Heart left ventricle (tissue), 16 donors: ENCODE measurements at regions of chr20 and their contacts with region 1.

Region 1: DNA sequence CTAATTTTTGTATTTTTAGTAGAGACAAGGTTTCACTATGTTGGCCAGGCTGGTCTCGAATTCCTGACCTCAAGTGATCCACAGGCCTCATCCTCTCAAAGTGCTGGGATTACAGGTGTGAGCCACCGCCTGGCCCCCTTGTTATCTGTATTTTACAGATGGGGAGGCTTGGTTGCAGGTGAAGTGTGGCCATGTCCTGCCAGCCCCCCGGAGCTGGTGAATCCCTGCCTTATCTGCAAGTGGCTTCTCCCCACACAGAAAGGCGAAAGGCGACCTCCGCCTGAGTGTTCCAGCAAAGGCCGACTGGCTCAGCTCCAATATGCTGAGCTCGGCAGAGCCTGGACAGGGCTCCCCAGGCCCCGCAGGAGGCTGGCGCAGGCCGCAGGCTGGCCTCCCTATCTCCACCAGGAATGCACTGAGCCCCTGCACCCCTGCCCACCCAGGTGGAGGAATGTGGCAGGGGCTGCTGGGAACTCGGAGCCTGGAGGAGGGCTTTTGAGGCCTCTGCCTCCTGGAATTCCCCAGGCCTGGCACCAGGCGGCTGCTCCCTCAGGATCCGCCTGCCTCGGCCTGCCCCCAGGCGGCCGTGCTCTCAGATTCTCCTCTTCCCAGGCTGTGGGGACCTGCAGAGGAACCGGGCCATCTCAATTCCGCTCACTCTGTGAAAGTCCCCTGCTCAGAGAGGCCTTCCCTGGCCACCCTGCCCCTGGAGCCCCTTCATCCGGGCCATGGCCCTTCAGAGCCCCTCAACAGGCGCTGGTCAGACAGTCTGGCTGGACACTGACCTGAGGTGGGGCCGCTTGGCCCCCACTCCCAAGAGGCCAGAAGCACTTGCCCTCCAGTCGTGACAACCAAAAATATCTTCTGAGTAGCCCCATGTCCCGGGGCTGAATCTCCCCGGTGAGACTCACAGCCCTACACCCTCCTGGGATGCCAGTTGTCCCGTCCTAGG is 9.3 kb upstream of the LAMA5 start:
- DNase-seq: peak; percentile 61 to 77 (median 68)
- ATAC-seq: peak; percentile 52 to 81 (median 73)
- H3K4me3 ChIP-seq: no peak overlapping the region
- H3K27ac ChIP-seq: peak overlapping the region in 11 of 12 donors; percentile 49 to 97 (median 67)
- H3K4me1 ChIP-seq: peaks cover 0 to 59% (median 36%) of the 10 kb centered on the region in 12 donors
- H3K27me3 ChIP-seq: no peaks in the 10 kb centered on the region
- CTCF ChIP-seq: peak; percentile 16 to 66 (median 51)
- POLR2A ChIP-seq: no peak

Region 2: GRCh38 chr20:62339647-62340070 is 36.7 kb before region 1 on chr20:
- intact Hi-C with region 1: loop called in 1 of 10 experiments (anchors 5 kb)
- DNase-seq: peak in 2 of 5 donors; percentile 7 to 37
- ATAC-seq: no peak
- H3K4me3 ChIP-seq: no peak overlapping the region
- H3K27ac ChIP-seq: no peak overlapping the region
- H3K4me1 ChIP-seq: no peaks in the 10 kb centered on the region
- H3K27me3 ChIP-seq: no peaks in the 10 kb centered on the region
- CTCF ChIP-seq: no peak
- POLR2A ChIP-seq: no peak

Region 3: DNA sequence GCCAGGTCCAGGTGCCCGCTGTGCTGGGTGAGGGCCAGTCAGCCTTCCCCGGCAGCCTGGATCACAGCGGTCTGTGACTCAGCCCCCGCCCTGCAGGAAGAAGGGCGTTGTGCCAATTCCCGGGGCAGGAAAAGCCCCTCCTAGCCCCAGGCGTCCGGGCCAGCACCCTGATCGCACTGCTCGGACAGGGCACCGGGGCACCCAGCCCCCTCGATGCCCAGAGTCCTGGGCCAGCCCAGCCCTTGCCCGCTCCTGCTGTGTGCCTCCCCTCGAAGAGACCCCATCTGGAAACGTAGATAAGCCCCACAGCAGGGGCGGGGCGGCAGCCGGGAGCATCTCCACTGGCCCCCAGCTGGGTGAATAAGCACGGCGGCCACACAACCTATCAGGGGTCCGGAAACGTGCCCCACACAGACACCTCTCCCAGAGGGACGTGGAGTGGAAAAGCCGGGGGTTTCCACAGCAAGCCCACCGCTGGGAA is 19.2 kb before region 1 on chr20:
- intact Hi-C with region 1: loop called in 2 of 10 experiments (anchors 2 kb)
- DNase-seq: peak; percentile 85 to 92 (median 87)
- ATAC-seq: peak; percentile 17 to 56 (median 44)
- H3K4me3 ChIP-seq: peak overlapping the region in 11 of 12 donors; percentile 2 to 48 (median 34)
- H3K27ac ChIP-seq: peak overlapping the region; percentile 69 to 97 (median 93)
- H3K4me1 ChIP-seq: peaks cover 36 to 96% (median 84%) of the 10 kb centered on the region in 12 donors
- H3K27me3 ChIP-seq: peaks cover 0 to 4% (median 0%) of the 10 kb centered on the region in 9 donors
- CTCF ChIP-seq: no peak
- POLR2A ChIP-seq: peak in 1 of 2 donors; percentile 12

Region 4: DNA sequence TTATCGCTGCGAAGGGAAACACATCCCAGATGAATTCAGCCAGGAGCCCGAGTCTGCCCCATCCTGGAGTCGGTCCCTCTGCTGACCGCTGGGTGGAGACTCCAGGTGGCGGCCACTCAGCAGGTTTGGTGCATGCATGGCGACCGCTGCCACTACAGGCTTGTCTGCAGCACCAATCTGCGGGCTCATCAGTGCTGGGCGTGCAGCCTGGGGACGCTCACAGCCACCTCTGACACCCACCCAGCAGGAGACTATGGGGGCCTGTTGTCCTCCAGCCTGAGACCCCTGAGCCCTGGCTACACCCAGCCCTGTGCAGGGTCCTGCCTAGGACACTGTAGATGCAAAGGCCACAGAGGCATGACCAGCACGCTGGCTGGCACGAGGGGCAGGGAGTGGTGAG is 140.0 kb after region 1 on chr20:
- intact Hi-C with region 1: no loop called
- DNase-seq: peak in 2 of 5 donors; percentile 44 to 68
- ATAC-seq: peak in 3 of 4 donors; percentile 53 to 65 (median 61)
- H3K4me3 ChIP-seq: no peak overlapping the region
- H3K27ac ChIP-seq: no peak overlapping the region
- H3K4me1 ChIP-seq: peaks cover 0 to 16% (median 7%) of the 10 kb centered on the region in 12 donors
- H3K27me3 ChIP-seq: peaks cover 0 to 34% (median 0%) of the 10 kb centered on the region in 9 donors
- CTCF ChIP-seq: peak in 11 of 12 donors; percentile 26 to 57 (median 38)
- POLR2A ChIP-seq: no peak